ENCODE measurements at regions of chr21 and their contacts with region 1.

Region 1: DNA sequence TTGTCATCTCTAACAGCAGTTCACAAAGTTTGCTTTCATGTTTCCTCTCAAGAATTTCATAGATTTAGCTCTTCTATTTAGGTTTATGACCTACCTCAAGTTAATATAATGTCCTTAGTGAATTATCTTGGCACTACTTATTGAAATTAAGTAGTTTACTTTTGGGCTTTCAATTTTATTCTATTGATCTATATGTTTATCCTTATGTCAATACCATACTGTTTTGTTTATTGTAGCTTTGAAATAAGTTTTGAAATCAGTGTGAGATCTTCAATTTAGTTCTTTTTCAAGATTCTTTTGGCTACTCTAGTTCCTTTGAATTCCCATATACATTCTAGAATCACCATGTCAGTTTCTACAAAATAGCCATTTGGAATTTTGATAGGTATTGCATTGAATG is 26.2 kb upstream of the KCNJ15 start:
- DNase-seq: no peak
- H3K4me3 Mint-ChIP-seq: no peak overlapping the region
- H3K27ac Mint-ChIP-seq: no peak overlapping the region
- H3K4me1 Mint-ChIP-seq: no peaks in the 10 kb centered on the region
- H3K27me3 Mint-ChIP-seq: no peaks in the 10 kb centered on the region

Region 2: GRCh38 chr21:38219049-38219628 is 11.5 kb before region 1 on chr21:
- CTCF ChIA-PET with region 1: interaction called, 13 read pairs
- POLR2A ChIA-PET with region 1: no interaction called
- intact Hi-C with region 1: no loop called
- DNase-seq: peak; percentile 69
- H3K4me3 Mint-ChIP-seq: no peak overlapping the region
- H3K27ac Mint-ChIP-seq: no peak overlapping the region
- H3K4me1 Mint-ChIP-seq: peaks cover 6% of the 10 kb centered on the region
- H3K27me3 Mint-ChIP-seq: peaks cover 2% of the 10 kb centered on the region

Region 3: GRCh38 chr21:38250991-38251418 is 20.4 kb after region 1 on chr21:
- CTCF ChIA-PET with region 1: no interaction called
- POLR2A ChIA-PET with region 1: no interaction called
- intact Hi-C with region 1: no loop called
- DNase-seq: no peak
- H3K4me3 Mint-ChIP-seq: no peak overlapping the region
- H3K27ac Mint-ChIP-seq: no peak overlapping the region
- H3K4me1 Mint-ChIP-seq: peaks cover 6% of the 10 kb centered on the region
- H3K27me3 Mint-ChIP-seq: peaks cover 11% of the 10 kb centered on the region

Measured in activated CD4-positive, alpha-beta memory T cell treated with anti-CD3 and anti-CD28 coated beads for 36 hours (primary cell).